ENCODE measurements at regions of chr11 and their contacts with region 1.

Region 1: DNA sequence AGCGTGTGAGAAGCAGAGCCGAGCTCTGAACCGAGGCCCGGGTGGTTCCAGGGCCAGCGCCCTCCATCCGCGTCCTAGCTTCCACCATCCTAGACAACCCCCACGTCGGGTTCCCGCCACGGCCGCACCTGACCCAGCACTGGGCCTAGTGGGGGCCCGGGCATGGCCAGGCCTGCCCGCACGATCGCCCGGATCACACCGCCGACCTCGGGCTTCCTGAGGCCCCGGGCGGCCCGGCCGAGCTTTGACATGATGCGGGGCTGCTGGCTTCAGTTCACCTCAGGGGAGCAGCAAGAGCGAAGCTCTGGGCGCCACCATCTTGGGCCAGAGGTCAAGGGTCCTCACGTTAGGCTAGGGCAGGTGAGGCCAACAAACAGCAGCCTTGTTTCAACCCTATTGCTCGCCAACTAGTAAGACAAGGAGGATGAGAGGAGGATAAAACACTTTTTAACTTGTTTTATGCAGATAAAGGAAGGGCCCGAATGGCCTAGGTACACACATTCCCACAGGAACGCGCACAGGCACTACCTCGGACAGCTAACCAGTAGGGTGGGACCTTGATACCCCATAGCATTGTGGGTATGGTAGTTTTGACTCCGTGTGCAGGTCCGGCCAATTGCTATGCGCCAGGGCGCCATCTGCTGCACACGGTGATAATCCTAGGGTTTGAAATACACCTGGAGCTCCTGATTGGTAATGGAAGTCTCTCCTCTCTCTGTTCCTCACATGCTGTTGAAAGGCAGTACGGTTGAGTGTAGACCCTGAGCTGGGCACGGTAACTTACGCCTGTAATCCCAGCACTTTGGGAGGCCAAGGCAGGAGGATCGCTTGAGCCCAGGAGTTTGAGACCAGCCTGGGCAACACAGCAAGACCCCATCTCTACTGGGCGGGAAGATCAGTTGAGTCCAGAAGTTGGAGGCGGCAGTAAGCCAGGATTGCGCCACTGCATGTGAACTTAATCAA is at the start of gene MRPL11:
- DNase-seq: peak; percentile 93
- ATAC-seq: peak; percentile 98
- H3K4me3 Mint-ChIP-seq: peak within 1 kb of the TSS; percentile 92
- H3K27ac Mint-ChIP-seq: peak within 1 kb of the TSS; percentile 92
- H3K4me1 Mint-ChIP-seq: peaks cover 21% of the 10 kb centered on the region
- H3K27me3 Mint-ChIP-seq: no peaks in the 10 kb centered on the region
- total RNA-seq, gene MRPL11: 75.5 to 91.3 TPM

Region 2: DNA sequence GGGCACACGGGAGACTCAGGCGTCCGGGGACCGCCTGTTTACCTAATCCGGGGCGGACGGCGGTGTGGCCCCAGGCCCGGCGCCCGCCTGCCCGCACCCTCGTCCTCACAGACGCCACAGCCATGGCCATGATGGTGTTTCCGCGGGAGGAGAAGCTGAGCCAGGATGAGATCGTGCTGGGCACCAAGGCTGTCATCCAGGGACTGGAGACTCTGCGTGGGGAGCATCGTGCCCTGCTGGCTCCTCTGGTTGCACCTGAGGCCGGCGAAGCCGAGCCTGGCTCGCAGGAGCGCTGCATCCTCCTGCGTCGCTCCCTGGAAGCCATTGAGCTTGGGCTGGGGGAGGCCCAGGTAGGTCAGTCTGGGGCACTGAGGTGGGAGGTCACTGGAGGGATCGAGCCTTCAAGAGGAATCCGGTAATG is 180.3 kb before region 1 on chr11:
- CTCF ChIA-PET with region 1: no interaction called
- DNase-seq: no peak
- ATAC-seq: peak; percentile 1
- H3K4me3 Mint-ChIP-seq: peak overlapping the region; percentile 87
- H3K27ac Mint-ChIP-seq: peak overlapping the region; percentile 98
- H3K4me1 Mint-ChIP-seq: peaks cover 26% of the 10 kb centered on the region
- H3K27me3 Mint-ChIP-seq: no peaks in the 10 kb centered on the region

Region 3: DNA sequence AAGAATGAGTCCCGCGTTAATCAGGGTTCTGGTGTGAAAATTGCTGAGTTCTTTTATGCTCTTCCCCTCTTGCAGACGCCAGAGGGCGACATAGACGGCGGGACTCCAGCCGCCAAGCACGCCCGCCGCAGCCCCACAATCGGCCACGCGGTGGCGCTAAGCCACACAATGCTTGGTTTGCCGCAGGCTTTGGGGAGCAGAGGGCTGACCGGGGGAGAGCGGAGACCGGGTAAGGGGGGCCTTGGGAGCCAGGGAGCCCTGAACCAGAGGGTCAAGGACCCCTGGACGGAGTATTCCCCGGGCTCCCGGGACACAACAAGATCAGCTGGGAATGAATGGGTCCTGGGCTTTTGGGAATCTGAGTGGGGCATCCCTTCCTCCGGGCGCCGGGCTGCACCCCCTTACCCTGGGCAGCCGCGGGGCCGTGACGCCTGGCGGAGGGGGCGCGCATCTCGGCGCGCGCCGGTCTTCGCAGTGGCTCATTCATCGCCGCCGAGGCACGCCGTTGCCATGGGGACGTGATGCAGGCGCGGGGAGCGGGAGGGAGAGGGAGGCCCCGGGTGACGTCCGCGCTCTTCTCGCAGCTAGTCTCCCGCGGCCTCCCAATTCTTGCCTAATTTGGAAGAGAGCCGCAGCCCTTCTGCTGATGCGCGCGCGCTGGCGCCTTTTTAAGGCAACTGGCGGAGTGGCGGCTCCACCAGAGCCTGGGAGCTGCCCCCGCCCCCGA is 30.1 kb before region 1 on chr11:
- CTCF ChIA-PET with region 1: interaction called, 46 read pairs
- DNase-seq: peak; percentile 92
- ATAC-seq: peak; percentile 88
- H3K4me3 Mint-ChIP-seq: peak overlapping the region; percentile 63
- H3K27ac Mint-ChIP-seq: peak overlapping the region; percentile 34
- H3K4me1 Mint-ChIP-seq: peaks cover 3% of the 10 kb centered on the region
- H3K27me3 Mint-ChIP-seq: peaks cover 35% of the 10 kb centered on the region

Region 4: GRCh38 chr11:66421492-66422205 is 17.1 kb before region 1 on chr11:
- CTCF ChIA-PET with region 1: interaction called, 23 read pairs
- DNase-seq: peak; percentile 91
- ATAC-seq: peak; percentile 79
- H3K4me3 Mint-ChIP-seq: no peak overlapping the region
- H3K27ac Mint-ChIP-seq: no peak overlapping the region
- H3K4me1 Mint-ChIP-seq: peaks cover 14% of the 10 kb centered on the region
- H3K27me3 Mint-ChIP-seq: peaks cover 35% of the 10 kb centered on the region

Region 5: DNA sequence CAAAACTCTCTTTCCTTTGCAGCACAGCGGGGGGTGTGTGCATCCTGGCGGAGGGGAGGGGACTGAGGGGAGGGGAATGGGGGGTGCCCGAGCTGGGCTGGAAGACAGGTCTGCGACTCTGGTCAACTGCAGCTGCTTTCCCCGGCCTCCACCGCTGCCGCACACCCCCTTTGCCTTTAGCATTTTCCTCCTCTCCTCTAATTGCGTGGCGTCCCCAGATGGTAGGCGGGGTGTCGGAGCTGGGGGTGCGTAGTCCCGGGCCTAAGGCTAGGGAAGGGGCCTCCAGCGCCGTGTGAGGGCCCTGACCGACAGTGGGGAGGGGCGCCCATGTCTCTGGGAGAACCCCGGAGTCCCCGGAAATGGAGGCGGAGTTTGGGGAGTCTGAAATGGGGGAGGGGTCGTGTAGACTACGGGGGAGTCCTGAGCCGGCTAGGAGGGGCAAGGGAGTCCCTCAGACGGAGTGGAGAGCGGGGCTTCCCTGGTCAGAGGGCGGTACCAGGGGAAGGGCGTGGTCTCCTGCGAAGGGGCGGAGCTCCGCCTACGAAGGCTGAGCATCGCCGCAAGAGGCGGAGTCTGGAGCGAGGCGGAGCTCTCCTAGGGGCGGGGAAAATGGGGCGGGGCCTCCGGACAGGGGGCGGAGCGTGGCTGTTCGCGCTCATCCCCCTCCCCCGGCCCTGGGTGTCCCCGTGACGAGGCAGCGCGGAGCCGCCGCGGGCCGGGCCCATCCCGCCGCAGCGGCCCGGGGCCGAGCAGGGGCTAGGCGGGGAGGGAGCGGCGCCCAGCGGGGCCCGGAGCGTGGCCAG is 27.6 kb after region 1 on chr11 and contains the start of gene PELI3:
- CTCF ChIA-PET with region 1: interaction called, 10 read pairs
- DNase-seq: peak; percentile 95
- ATAC-seq: peak; percentile 91
- H3K4me3 Mint-ChIP-seq: peak within 1 kb of the TSS; percentile 80
- H3K27ac Mint-ChIP-seq: peak within 1 kb of the TSS; percentile 75
- H3K4me1 Mint-ChIP-seq: peaks cover 27% of the 10 kb centered on the region
- H3K27me3 Mint-ChIP-seq: no peaks in the 10 kb centered on the region
- total RNA-seq, gene PELI3: 4.1 to 5.7 TPM

Region 6: DNA sequence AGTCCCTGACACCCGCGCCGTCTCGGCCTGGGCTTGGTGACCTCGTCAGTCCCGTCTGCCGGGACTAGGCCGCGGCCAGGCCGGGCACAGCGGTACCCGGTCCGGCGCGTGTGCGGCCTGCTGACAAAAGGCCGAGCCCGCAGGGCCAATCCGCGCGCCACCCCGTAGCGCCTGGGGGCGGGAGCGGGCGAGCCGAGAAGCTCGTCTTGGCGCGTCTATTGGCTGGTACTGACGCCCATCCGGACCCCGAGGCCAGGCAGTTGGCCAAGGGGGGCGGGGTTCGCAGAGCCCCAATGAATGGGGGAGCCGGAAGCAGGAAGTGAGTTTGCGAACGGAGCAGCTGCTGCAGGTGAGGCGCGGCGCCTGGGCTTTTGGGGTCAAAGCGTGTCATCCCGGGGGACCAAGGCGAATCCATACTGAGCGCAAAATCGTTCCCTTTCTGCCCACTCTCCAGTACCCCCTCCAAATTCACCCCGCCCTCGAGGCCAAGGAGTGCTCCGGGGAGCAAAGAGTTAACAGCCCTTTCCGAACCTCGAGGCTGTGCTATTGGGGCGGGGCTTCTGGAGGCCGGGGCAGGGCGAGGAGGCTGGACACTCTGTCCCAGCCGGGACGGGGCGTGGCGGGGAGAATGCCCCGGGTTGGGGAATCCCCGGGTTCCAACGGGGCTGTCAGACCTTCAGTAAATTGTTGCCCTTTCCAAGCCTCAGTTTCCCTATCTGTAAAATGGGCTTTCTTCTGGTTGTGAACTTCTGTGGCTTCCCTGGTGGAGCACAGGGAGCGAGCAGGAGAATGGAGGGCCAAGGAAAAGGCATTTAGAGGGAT is 41.5 kb after region 1 on chr11 and contains the start of gene DPP3:
- CTCF ChIA-PET with region 1: interaction called, 25 read pairs
- DNase-seq: peak; percentile 98
- ATAC-seq: peak; percentile 98
- H3K4me3 Mint-ChIP-seq: peak within 1 kb of the TSS; percentile 91
- H3K27ac Mint-ChIP-seq: peak within 1 kb of the TSS; percentile 93
- H3K4me1 Mint-ChIP-seq: peaks cover 33% of the 10 kb centered on the region
- H3K27me3 Mint-ChIP-seq: no peaks in the 10 kb centered on the region
- total RNA-seq, gene DPP3: 54.2 to 79.6 TPM